Caco-2 (cell line): ENCODE measurements at regions of chr21 and their contacts with region 1.

Region 1: GRCh38 chr21:16993416-16994038 is 519.3 kb upstream of the CXADR start:
- DNase-seq: no peak
- H3K4me3 ChIP-seq: no peak overlapping the region
- H3K4me3 Mint-ChIP-seq: no peak overlapping the region
- H3K27ac Mint-ChIP-seq: no peak overlapping the region
- H3K4me1 ChIP-seq: no peaks in the 10 kb centered on the region
- H3K4me1 Mint-ChIP-seq: no peaks in the 10 kb centered on the region
- H3K27me3 ChIP-seq: no peaks in the 10 kb centered on the region
- H3K27me3 Mint-ChIP-seq: peaks cover 7% of the 10 kb centered on the region
- CTCF ChIP-seq: no peak

Region 2: DNA sequence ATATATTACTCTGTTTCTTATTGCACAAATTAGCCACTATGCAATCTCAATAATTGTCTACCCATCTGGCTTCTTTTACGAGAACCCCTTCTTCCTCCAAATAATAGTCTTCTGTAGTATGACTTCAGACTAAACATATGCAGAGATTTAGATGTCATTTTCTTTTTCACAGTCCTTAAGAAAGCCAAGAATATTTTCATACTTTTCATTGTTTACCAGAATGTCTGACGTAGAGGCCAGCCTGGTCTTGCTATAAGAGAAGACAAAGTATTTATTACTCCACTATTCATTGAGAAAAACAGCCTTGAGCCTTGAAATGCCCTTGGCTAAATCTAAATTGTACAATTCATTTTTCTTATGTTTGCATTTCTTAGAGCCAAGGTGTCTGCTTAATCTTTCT is 195.6 kb before region 1 on chr21:
- CTCF ChIA-PET with region 1: no interaction called
- POLR2A ChIA-PET with region 1: no interaction called
- intact Hi-C with region 1: no loop called
- DNase-seq: no peak
- H3K4me3 ChIP-seq: no peak overlapping the region
- H3K4me3 Mint-ChIP-seq: no peak overlapping the region
- H3K27ac Mint-ChIP-seq: no peak overlapping the region
- H3K4me1 ChIP-seq: no peaks in the 10 kb centered on the region
- H3K4me1 Mint-ChIP-seq: no peaks in the 10 kb centered on the region
- H3K27me3 ChIP-seq: no peaks in the 10 kb centered on the region
- H3K27me3 Mint-ChIP-seq: peaks cover 2% of the 10 kb centered on the region
- CTCF ChIP-seq: no peak

Region 3: DNA sequence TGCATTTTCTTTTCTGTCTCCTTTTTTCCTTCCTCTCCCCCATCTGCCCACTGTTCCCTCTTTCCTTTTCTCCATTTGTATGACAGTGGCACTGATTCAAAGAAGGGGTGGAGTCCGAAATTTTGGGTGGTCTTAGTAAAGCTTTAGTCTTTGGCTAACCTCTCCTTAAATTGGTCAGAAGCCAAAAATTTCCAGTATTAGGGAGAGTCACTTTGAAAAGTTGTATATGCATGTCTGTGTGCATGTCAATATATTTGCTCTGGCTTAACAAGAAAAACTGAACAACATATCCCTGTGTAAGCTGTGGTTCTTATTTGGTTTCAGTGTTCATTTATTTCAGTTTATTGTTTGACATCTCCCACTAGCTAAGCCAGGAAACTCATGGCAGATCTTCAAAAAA is 204.5 kb after region 1 on chr21:
- CTCF ChIA-PET with region 1: no interaction called
- POLR2A ChIA-PET with region 1: interaction called, 17 read pairs
- intact Hi-C with region 1: no loop called
- DNase-seq: no peak
- H3K4me3 ChIP-seq: no peak overlapping the region
- H3K4me3 Mint-ChIP-seq: no peak overlapping the region
- H3K27ac Mint-ChIP-seq: no peak overlapping the region
- H3K4me1 ChIP-seq: no peaks in the 10 kb centered on the region
- H3K4me1 Mint-ChIP-seq: no peaks in the 10 kb centered on the region
- H3K27me3 ChIP-seq: no peaks in the 10 kb centered on the region
- H3K27me3 Mint-ChIP-seq: peaks cover 3% of the 10 kb centered on the region
- CTCF ChIP-seq: no peak

Region 4: DNA sequence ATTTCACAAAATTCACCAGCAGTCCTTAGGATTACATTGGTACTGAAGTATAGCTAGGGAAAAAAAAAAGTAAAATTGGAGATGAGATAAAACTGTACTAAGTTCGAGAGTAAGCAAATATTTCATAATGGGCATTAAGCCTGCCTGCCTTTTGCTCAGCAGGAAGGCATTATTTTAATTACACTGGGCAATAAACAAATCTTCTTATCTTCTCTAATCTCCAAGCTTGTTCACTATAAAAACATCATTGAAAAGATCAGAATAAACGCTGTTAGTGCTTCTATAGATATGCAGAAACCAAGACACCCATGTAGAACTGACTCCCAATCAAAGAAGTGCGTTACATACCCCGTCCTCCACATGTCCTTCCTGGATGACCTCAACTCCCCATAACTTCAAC is 1076.9 kb after region 1 on chr21:
- CTCF ChIA-PET with region 1: no interaction called
- POLR2A ChIA-PET with region 1: no interaction called
- intact Hi-C with region 1: no loop called
- DNase-seq: no peak
- H3K4me3 ChIP-seq: no peak overlapping the region
- H3K4me3 Mint-ChIP-seq: no peak overlapping the region
- H3K27ac Mint-ChIP-seq: no peak overlapping the region
- H3K4me1 ChIP-seq: no peaks in the 10 kb centered on the region
- H3K4me1 Mint-ChIP-seq: no peaks in the 10 kb centered on the region
- H3K27me3 ChIP-seq: no peaks in the 10 kb centered on the region
- H3K27me3 Mint-ChIP-seq: peaks cover 6% of the 10 kb centered on the region
- CTCF ChIP-seq: no peak